Activated T-helper 2 cell treated with anti-CD3 and anti-CD28 coated beads, Interferon-gamma antibody, Interleukin-2, Interleukin-4, amounts not matched to agents 10 μg/mL and 5 μg/mL and 100 μg/mL, durations not matched to agents 14 hours and 24 hours and 36 hours (primary cell): ENCODE measurements at regions of chr5 and their contacts with region 1.

Region 1: GRCh38 chr5:56105511-56106291 is 110.9 kb upstream of the IL6ST start:
- DNase-seq: no peak
- H3K4me3 Mint-ChIP-seq: no peak overlapping the region
- H3K27ac Mint-ChIP-seq: peak overlapping the region; percentile 24
- H3K4me1 Mint-ChIP-seq: peaks cover 48% of the 10 kb centered on the region
- H3K27me3 Mint-ChIP-seq: no peaks in the 10 kb centered on the region

Region 2: DNA sequence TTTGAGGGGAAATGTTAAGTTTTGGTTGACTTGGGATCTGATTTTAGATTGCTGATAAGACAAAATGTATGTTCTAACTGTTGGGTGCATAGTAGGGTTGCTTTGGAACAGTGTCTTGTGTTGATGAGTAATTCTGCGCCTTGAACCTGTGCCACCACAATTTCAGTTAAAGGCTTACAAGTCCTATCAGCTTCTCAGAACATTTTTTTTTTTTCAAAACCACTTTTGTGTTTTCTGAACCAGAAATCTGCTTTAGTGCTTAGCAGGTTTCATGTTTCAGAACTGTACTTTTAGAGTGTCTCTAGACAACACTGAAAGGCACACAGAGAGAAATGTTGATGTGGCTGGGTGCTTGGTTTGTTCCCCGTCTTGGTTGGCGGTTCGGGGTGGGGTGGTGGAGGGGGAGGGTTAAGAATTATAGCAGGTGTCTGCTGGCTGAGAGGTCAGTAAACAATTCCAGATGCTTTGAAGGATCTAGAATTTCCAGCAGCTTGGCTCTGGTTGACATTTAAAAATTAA is 42.8 kb after region 1 on chr5:
- intact Hi-C with region 1: loop called (anchors 5 kb)
- DNase-seq: peak; percentile 59
- H3K4me3 Mint-ChIP-seq: no peak overlapping the region
- H3K27ac Mint-ChIP-seq: peak overlapping the region; percentile 54
- H3K4me1 Mint-ChIP-seq: peaks cover 54% of the 10 kb centered on the region
- H3K27me3 Mint-ChIP-seq: no peaks in the 10 kb centered on the region